ENCODE measurements at regions of chr9 and their contacts with region 1.

Region 1: DNA sequence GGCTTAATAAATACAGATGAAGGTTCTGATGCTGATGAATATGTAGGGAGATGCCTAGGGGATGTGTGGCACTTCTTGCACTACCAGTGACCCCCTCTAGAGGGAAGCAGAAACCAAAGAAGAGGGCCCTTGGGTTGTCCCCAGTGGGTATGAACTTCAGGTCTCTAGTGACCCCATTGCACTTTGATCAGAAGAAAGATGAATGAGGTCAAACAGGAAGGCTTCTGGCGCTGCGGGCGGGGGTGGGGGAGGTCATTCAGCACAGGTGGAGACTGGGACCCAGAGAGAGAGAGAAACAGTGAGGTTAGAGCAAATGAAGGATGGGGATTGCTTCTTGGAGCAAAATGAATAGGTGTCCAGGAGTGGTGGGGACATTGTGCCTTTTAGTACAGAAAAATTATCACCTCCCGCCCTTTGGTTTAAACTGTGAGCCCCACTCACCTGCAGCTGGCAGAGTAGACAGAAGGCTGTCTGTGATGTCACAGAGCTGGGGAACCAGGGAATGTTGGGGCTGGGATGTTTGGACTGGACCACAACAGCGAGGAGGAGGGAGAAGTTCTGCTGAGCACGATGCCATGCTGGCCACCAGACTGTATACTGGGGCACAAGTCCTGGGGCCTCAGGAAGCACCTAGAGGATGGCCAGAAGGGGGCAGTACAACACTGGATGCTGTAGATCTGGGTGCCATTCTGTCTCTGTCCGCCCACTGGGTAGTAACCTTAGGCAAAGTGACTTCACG is at the start of gene TEX48:
- DNase-seq: peak; percentile 88
- H3K4me3 Mint-ChIP-seq: no peak within 1 kb of the TSS
- H3K27ac Mint-ChIP-seq: peak within 1 kb of the TSS; percentile 88
- H3K4me1 Mint-ChIP-seq: peaks cover 64% of the 10 kb centered on the region
- H3K27me3 Mint-ChIP-seq: peaks cover 4% of the 10 kb centered on the region

Region 2: DNA sequence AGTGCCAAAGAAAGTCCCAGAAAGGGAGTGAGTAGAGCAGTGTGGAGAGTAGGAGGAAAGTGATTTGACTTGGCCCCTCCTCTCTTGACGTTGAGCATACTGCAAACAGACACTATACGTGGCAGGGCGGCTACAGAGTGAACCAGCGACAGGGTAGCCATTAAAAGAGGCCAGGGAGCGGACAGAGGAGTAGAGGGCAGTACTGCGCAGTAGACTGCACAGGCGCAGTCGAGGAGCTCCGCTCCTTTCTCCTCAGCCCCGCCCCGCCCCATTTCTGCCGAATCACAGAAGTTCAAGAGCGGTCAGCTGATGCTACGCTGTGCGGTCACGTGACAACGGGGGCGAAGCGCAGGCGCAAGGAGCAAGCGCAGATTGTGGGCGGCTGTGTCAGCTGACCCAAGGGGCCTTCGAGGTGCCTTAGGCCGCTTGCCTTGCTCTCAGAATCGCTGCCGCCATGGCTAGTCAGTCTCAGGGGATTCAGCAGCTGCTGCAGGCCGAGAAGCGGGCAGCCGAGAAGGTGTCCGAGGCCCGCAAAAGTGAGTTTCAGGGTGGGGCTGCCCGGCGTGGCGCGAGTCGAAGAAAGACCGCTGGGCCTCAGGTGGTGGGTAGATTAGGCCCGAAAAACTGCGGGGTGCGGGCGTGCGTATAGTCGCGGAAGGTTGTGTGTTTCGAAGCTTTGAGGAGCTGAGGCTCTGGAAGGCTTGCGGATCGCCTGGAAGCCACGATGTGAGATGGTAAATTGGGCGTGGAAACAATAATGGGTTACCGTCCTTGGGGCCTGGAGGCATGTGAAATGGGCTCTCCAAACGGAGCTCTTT is 94.2 kb before region 1 on chr9 and contains the start of gene ATP6V1G1:
- CTCF ChIA-PET with region 1: interaction called, 10 read pairs
- DNase-seq: peak; percentile 100
- H3K4me3 Mint-ChIP-seq: peak within 1 kb of the TSS; percentile 97
- H3K27ac Mint-ChIP-seq: peak within 1 kb of the TSS; percentile 92
- H3K4me1 Mint-ChIP-seq: peaks cover 45% of the 10 kb centered on the region
- H3K27me3 Mint-ChIP-seq: peaks cover 7% of the 10 kb centered on the region

Region 3: DNA sequence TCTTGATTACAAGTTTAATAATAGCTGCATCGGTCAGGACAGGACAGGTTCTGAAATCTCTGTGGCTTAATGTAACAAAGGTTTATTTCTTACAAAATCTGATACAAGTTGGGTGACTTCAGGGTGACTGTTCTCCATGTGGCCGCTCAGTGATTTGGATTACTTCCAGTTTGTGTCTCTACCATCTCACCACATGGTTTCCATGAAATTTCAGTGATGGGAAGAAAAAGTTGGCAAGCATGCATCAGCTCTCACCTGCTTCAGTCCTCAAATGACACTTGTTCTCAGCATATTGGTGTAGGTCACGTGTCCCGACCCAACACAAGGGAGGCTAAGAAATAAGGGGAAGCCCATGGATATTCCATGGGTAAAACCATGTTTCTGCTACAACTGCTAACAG is 78.5 kb before region 1 on chr9:
- CTCF ChIA-PET with region 1: no interaction called
- DNase-seq: no peak
- H3K4me3 Mint-ChIP-seq: no peak overlapping the region
- H3K27ac Mint-ChIP-seq: no peak overlapping the region
- H3K4me1 Mint-ChIP-seq: no peaks in the 10 kb centered on the region
- H3K27me3 Mint-ChIP-seq: no peaks in the 10 kb centered on the region

Region 4: GRCh38 chr9:114718801-114719221 is 37.0 kb after region 1 on chr9:
- CTCF ChIA-PET with region 1: interaction called, 15 read pairs
- DNase-seq: peak; percentile 96
- H3K4me3 Mint-ChIP-seq: peak overlapping the region; percentile 5
- H3K27ac Mint-ChIP-seq: peak overlapping the region; percentile 97
- H3K4me1 Mint-ChIP-seq: peaks cover 75% of the 10 kb centered on the region
- H3K27me3 Mint-ChIP-seq: peaks cover 4% of the 10 kb centered on the region

Region 5: GRCh38 chr9:114738581-114739316 is 57.0 kb after region 1 on chr9:
- CTCF ChIA-PET with region 1: interaction called, 190 read pairs
- DNase-seq: peak; percentile 79
- H3K4me3 Mint-ChIP-seq: no peak overlapping the region
- H3K27ac Mint-ChIP-seq: peak overlapping the region; percentile 88
- H3K4me1 Mint-ChIP-seq: peaks cover 70% of the 10 kb centered on the region
- H3K27me3 Mint-ChIP-seq: no peaks in the 10 kb centered on the region

Region 6: GRCh38 chr9:114836769-114837168 is 155.0 kb after region 1 on chr9:
- CTCF ChIA-PET with region 1: no interaction called
- DNase-seq: peak; percentile 22
- H3K4me3 Mint-ChIP-seq: no peak overlapping the region
- H3K27ac Mint-ChIP-seq: no peak overlapping the region
- H3K4me1 Mint-ChIP-seq: peaks cover 10% of the 10 kb centered on the region
- H3K27me3 Mint-ChIP-seq: peaks cover 4% of the 10 kb centered on the region

Region 7: GRCh38 chr9:114906908-114907571 is 225.3 kb after region 1 on chr9:
- CTCF ChIA-PET with region 1: interaction called, 149 read pairs
- DNase-seq: peak; percentile 47
- H3K4me3 Mint-ChIP-seq: peak overlapping the region; percentile 39
- H3K27ac Mint-ChIP-seq: peak overlapping the region; percentile 97
- H3K4me1 Mint-ChIP-seq: peaks cover 58% of the 10 kb centered on the region
- H3K27me3 Mint-ChIP-seq: no peaks in the 10 kb centered on the region

Region 8: DNA sequence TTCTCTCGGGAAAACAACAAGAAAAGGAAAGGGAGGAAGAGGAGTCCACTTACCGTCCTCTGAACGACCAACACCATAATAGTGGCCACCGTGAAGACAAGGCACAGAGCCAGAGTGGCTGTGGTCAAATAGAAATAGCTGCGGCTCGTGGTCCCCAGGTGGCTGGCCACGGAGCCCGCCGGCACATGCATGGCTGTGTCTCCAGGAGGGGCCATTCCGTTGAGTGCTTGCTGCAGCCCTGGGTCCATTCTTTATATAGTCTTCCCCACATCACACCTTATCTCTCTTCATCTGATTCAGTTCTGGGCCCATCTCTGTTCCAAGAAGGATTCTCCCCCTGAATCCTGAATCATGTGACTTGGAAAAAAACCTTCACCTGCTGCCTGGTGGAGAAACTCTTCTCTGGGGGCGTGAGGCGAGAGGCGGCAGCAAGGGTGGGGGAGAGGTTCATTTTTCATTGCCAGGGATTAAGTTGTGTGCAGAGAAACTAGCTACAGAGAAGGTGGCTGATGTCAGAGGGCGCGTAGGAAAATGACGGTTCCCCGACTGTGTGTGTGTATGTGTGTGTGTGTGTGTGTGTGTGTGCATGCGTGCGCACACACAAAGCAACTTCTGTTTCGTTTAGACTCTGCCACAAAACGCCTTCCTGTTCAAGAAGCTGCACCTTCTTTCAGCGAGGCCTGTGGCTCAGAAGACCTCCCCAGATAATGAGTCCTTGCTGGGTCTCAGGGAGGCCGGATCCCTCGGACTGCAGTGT is 248.5 kb after region 1 on chr9 and contains the start of gene TNFSF8:
- CTCF ChIA-PET with region 1: interaction called, 21 read pairs
- DNase-seq: peak; percentile 87
- H3K4me3 Mint-ChIP-seq: peak within 1 kb of the TSS; percentile 97
- H3K27ac Mint-ChIP-seq: peak within 1 kb of the TSS; percentile 98
- H3K4me1 Mint-ChIP-seq: peaks cover 43% of the 10 kb centered on the region
- H3K27me3 Mint-ChIP-seq: no peaks in the 10 kb centered on the region

Region 9: GRCh38 chr9:115013998-115014397 is 332.2 kb after region 1 on chr9:
- CTCF ChIA-PET with region 1: interaction called, 128 read pairs
- DNase-seq: peak; percentile 89
- H3K4me3 Mint-ChIP-seq: no peak overlapping the region
- H3K27ac Mint-ChIP-seq: peak overlapping the region; percentile 76
- H3K4me1 Mint-ChIP-seq: peaks cover 46% of the 10 kb centered on the region
- H3K27me3 Mint-ChIP-seq: peaks cover 13% of the 10 kb centered on the region

Measured in activated naive CD4-positive, alpha-beta T cell treated with anti-CD3 and anti-CD28 coated beads, Interleukin-2, amount 10 ng/mL, durations not matched to agents 7 days and 5 days (primary cell).